ENCODE measurements at regions of chr17 and their contacts with region 1.

Region 1: GRCh38 chr17:59440784-59441441 is 109.5 kb downstream of the YPEL2 start:
- DNase-seq: peak; percentile 91
- ATAC-seq: peak; percentile 98
- H3K4me3 Mint-ChIP-seq: no peak overlapping the region
- H3K27ac Mint-ChIP-seq: no peak overlapping the region
- H3K4me1 Mint-ChIP-seq: peaks cover 3% of the 10 kb centered on the region
- H3K27me3 Mint-ChIP-seq: no peaks in the 10 kb centered on the region; the same call in 1 of the 2 replicates
- CTCF ChIP-seq: peak; percentile 79

Region 2: GRCh38 chr17:59234631-59235030 is 206.3 kb before region 1 on chr17:
- CTCF ChIA-PET with region 1: no interaction called
- POLR2A ChIA-PET with region 1: no interaction called
- DNase-seq: no peak
- ATAC-seq: no peak
- H3K4me3 Mint-ChIP-seq: no peak overlapping the region
- H3K27ac Mint-ChIP-seq: no peak overlapping the region
- H3K4me1 Mint-ChIP-seq: no peaks in the 10 kb centered on the region
- H3K27me3 Mint-ChIP-seq: no peaks in the 10 kb centered on the region
- CTCF ChIP-seq: no peak

Region 3: DNA sequence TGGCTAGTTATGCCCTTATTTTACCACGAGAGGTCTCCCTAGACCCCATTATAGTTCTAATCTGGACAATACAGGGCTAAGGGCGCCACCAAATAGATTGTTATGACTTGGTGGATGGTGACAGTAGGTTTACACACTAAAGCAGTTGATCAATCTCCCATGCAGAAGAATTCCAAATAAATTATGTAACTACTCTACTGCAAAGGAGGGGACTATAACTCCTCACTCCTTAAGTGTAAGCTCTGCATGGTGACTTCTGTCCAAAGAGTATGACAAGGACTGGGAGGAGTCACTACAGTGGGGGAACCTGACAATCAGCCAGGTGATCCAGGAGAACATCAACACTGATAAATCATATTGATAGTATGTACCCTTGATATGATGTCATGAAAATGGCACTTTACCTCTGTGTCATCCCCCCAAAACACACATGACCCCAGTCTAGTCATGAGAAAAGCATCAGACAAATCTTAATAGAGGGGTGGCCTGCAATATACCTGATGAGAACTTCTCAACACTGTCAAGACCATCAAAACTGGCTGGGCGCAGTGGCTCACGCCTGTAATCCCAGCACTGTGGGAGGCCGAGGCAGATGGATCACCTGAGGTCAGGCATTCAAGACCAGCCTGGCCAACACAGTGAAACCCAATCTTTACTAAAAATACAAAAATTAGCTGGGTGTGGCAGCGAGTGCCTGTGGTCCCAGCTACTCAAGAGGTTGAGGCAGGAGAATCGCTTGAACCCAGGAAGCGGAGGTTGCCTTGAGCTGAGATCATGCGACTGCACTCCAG is 129.6 kb before region 1 on chr17:
- CTCF ChIA-PET with region 1: interaction called, 16 read pairs
- POLR2A ChIA-PET with region 1: interaction called, 3 read pairs
- DNase-seq: peak; percentile 18
- ATAC-seq: peak; percentile 96
- H3K4me3 Mint-ChIP-seq: no peak overlapping the region
- H3K27ac Mint-ChIP-seq: no peak overlapping the region
- H3K4me1 Mint-ChIP-seq: no peaks in the 10 kb centered on the region
- H3K27me3 Mint-ChIP-seq: no peaks in the 10 kb centered on the region
- CTCF ChIP-seq: peak; percentile 67

Region 4: GRCh38 chr17:59347975-59348391 is 92.9 kb before region 1 on chr17:
- CTCF ChIA-PET with region 1: no interaction called
- POLR2A ChIA-PET with region 1: no interaction called
- DNase-seq: no peak
- ATAC-seq: peak; percentile 28; the same call in 1 of the 2 replicates
- H3K4me3 Mint-ChIP-seq: no peak overlapping the region
- H3K27ac Mint-ChIP-seq: peak overlapping the region; percentile 17; the same call in 1 of the 2 replicates
- H3K4me1 Mint-ChIP-seq: peaks cover 14% of the 10 kb centered on the region
- H3K27me3 Mint-ChIP-seq: no peaks in the 10 kb centered on the region
- CTCF ChIP-seq: no peak

Region 5: DNA sequence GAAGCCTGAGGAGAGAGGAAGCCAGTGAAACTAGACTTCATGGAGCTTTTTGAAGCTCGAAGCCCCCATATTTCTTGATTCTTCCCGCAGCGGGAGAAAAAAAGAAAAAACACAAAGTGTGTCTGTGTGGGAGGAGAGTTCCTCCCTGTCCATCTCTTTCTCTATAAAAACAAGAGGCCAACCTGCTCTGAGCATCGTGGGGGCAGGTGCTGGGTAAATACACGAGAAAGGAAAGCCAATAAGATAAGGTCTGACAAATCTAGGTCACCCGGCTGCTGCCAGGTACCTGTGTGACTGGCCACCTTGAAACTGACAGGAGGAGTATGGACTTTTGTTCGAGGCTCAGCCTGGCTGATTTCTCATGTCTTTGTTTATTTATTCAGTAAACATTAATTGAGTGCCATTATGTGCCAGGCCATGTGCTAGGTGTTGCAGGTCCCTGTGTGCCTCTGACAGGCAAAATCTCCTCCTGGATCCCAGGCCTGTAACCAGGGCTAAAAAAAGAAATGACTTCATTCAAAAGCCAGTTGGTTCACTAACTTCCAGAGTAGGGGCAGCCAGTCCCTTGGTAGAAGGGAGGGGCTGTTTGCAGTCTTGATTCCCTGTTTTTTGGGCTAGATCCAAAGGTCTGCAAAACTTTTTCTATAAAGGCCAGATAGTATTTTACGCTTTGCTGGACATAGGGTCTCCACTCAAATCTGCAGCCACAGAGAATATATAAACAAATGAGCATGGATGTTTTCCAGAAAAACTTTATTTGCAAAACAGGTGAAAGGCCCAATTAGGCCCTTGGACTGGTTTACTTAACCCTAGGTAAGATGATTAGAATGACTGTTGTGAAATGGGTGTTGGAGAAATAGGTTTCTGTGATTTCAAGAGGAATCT is 73.9 kb before region 1 on chr17:
- CTCF ChIA-PET with region 1: interaction called, 10 read pairs
- POLR2A ChIA-PET with region 1: no interaction called
- DNase-seq: no peak
- ATAC-seq: no peak; the same call in 1 of the 2 replicates
- H3K4me3 Mint-ChIP-seq: peak overlapping the region; percentile 18
- H3K27ac Mint-ChIP-seq: peak overlapping the region; percentile 97
- H3K4me1 Mint-ChIP-seq: peaks cover 68% of the 10 kb centered on the region
- H3K27me3 Mint-ChIP-seq: no peaks in the 10 kb centered on the region
- CTCF ChIP-seq: no peak

Region 6: GRCh38 chr17:59378458-59379074 is 62.3 kb before region 1 on chr17:
- CTCF ChIA-PET with region 1: no interaction called
- POLR2A ChIA-PET with region 1: no interaction called
- DNase-seq: no peak
- ATAC-seq: no peak
- H3K4me3 Mint-ChIP-seq: no peak overlapping the region
- H3K27ac Mint-ChIP-seq: no peak overlapping the region
- H3K4me1 Mint-ChIP-seq: peaks cover 12% of the 10 kb centered on the region
- H3K27me3 Mint-ChIP-seq: no peaks in the 10 kb centered on the region
- CTCF ChIP-seq: no peak

Region 7: GRCh38 chr17:59725691-59726090 is 284.8 kb after region 1 on chr17:
- CTCF ChIA-PET with region 1: no interaction called
- POLR2A ChIA-PET with region 1: no interaction called
- DNase-seq: no peak
- ATAC-seq: no peak
- H3K4me3 Mint-ChIP-seq: no peak overlapping the region
- H3K27ac Mint-ChIP-seq: no peak overlapping the region
- H3K4me1 Mint-ChIP-seq: peaks cover 11% of the 10 kb centered on the region
- H3K27me3 Mint-ChIP-seq: no peaks in the 10 kb centered on the region
- CTCF ChIP-seq: no peak

Measured in WTC11 (cell line).